ENCODE measurements at regions of chr16 and their contacts with region 1.

Region 1: GRCh38 chr16:12095275-12096156 is 119.0 kb downstream of the SNX29 start:
- DNase-seq: peak; percentile 49 to 72 (median 66)
- H3K4me3 ChIP-seq: peak overlapping the region in 3 of 7 experiments; percentile 17 to 70 (median 44)
- H3K27ac ChIP-seq: no peak overlapping the region
- H3K4me1 ChIP-seq: peaks cover 0 to 5% (median 0%) of the 10 kb centered on the region in 4 experiments
- H3K27me3 ChIP-seq: no peaks in the 10 kb centered on the region

Region 2: DNA sequence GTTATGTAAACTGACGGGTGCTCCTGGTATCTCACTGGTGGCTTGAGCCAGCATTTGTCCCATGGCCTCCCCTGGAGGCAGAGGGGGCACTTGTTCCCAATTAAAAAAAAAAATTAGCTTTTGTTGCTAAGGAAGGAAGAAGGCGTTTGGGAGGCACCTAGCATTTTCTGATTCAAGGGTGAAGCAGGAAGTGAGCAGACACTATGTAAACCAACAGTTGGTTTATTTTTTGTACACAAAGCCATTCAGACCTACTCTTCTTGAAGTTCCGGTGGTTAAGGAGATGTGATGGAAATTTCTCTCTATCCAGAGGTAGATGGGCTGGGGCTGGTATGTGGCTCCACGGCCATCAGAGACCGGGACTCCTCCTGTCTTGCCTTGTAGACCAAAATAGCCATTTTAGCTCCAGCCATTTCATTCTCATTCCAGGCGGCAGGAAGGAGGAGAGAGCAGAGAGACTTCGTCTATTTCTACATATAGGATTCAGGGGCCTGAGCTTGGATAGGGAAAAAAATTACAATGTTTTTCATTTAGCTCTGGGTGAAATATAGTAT is 16.0 kb before region 1 on chr16:
- CTCF ChIA-PET with region 1: interaction called, 14 read pairs
- POLR2A ChIA-PET with region 1: no interaction called
- DNase-seq: no peak
- H3K4me3 ChIP-seq: no peak overlapping the region
- H3K27ac ChIP-seq: peak overlapping the region in 1 of 2 experiments; percentile 46
- H3K4me1 ChIP-seq: peaks cover 0 to 25% (median 5%) of the 10 kb centered on the region in 4 experiments
- H3K27me3 ChIP-seq: no peaks in the 10 kb centered on the region

Region 3: GRCh38 chr16:12113523-12114345 is 18.2 kb after region 1 on chr16:
- CTCF ChIA-PET with region 1: interaction called, 29 read pairs
- POLR2A ChIA-PET with region 1: no interaction called
- DNase-seq: peak; percentile 54 to 93 (median 91)
- H3K4me3 ChIP-seq: peak overlapping the region in 1 of 7 experiments; percentile 43
- H3K27ac ChIP-seq: no peak overlapping the region
- H3K4me1 ChIP-seq: peaks cover 5 to 38% (median 34%) of the 10 kb centered on the region in 4 experiments
- H3K27me3 ChIP-seq: no peaks in the 10 kb centered on the region

Region 4: GRCh38 chr16:12124742-12125141 is 29.2 kb after region 1 on chr16:
- CTCF ChIA-PET with region 1: interaction called, 10 read pairs
- POLR2A ChIA-PET with region 1: no interaction called
- DNase-seq: peak; percentile 16 to 69 (median 58)
- H3K4me3 ChIP-seq: peak overlapping the region in 2 of 7 experiments; percentile 41 to 58
- H3K27ac ChIP-seq: no peak overlapping the region
- H3K4me1 ChIP-seq: peaks cover 3 to 16% (median 10%) of the 10 kb centered on the region in 4 experiments
- H3K27me3 ChIP-seq: no peaks in the 10 kb centered on the region

Region 5: GRCh38 chr16:12158428-12158827 is 62.9 kb after region 1 on chr16:
- CTCF ChIA-PET with region 1: no interaction called
- POLR2A ChIA-PET with region 1: no interaction called
- DNase-seq: no peak
- H3K4me3 ChIP-seq: no peak overlapping the region
- H3K27ac ChIP-seq: no peak overlapping the region
- H3K4me1 ChIP-seq: no peaks in the 10 kb centered on the region
- H3K27me3 ChIP-seq: no peaks in the 10 kb centered on the region

Region 6: DNA sequence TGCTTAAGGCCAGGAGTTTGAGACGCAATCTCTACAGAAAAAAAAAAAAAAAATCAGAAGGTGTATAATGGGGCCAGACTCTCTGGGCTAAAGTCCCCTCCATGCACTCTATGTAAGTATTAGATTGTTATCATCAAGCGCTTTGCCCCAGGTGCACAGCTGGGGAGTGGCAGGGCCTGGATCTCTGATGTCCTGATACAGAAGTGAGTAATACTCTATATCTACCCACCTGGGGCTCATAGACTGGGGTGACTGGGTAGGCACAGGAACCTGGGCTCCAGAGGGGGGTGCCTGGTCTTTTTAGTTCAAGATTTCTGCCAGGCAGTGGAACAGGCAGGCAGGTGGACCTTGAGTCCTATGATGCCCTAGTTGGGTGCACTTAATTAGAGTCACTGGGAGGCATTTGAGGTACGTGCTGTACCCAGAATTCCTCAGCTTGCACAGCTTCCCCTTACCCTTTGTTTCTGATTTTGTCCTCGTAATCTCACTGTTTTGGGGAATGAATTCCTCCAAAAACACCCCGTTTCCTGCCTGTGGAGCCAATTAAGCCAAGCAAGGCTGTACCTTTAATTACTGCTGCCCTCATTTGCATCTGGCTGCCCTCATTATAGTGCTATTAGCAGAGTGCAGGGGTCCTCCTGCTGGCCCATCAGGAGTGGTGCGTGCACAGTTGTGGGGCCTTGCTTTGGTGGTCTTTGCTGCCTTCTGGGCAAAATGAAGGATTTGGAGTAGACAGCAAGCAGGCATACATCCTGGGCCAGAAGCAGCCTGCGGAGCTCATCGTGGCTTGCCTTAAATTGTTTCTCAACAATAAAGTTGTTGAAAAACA is 120.0 kb after region 1 on chr16:
- CTCF ChIA-PET with region 1: interaction called, 95 read pairs
- POLR2A ChIA-PET with region 1: no interaction called
- DNase-seq: peak; percentile 42 to 63 (median 60)
- H3K4me3 ChIP-seq: no peak overlapping the region
- H3K27ac ChIP-seq: no peak overlapping the region
- H3K4me1 ChIP-seq: no peaks in the 10 kb centered on the region
- H3K27me3 ChIP-seq: no peaks in the 10 kb centered on the region

Region 7: DNA sequence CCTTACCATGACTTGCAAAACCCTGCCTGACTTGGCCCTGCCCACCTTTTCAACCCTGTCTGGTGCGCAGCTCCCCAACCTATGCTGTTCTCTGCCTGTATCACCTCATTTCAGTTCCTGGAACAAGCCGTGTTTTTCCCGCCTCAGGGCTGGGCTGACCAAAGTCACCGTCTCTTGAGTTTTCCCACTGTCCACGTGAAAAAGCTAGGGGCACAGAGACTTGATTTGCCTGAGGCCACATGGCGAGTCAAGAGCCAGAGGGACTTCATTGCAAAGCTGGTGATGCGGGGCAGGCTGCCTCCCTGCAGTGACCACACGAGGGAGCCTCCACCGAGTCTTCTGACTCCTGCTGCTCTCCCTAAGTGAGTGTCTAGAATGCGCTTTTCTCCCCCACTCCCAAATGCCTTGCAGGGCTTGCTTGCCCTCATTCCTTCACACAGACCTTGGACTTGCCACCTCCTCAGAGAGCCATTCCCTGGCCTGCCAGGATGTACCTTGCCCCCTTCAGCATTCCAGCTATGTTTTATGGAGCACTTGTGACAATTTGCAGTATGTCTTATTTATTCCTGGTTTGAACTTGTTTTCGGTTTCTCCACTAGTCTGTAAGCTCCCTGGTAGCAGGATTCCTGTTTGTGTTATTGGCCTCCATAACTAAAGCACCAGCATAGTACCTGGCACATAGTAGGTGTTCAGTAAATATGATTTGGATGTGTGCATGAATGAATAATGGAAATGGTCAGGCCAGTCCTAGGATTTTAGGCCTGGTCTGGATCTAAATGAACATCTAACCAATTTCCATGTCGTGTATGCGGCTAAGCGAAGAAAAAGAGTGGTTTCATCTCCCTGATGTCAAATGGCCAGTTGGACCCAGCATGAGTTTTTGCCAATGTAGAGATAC is 133.3 kb after region 1 on chr16:
- CTCF ChIA-PET with region 1: interaction called, 44 read pairs
- POLR2A ChIA-PET with region 1: no interaction called
- DNase-seq: peak; percentile 75 to 93 (median 91)
- H3K4me3 ChIP-seq: peak overlapping the region in 4 of 7 experiments; percentile 20 to 63 (median 28)
- H3K27ac ChIP-seq: no peak overlapping the region
- H3K4me1 ChIP-seq: peaks cover 3 to 13% (median 11%) of the 10 kb centered on the region in 4 experiments
- H3K27me3 ChIP-seq: no peaks in the 10 kb centered on the region

Measured in common myeloid progenitor, CD34-positive (primary cell).